Prostate gland (tissue), 2 donors: ENCODE measurements at regions of chr11 and their contacts with region 1.

Region 1: GRCh38 chr11:76680518-76681425 is 10.2 kb upstream of the LRRC32 start:
- DNase-seq: peak; percentile 36
- H3K4me3 ChIP-seq: no peak overlapping the region
- H3K27ac ChIP-seq: no peak overlapping the region
- H3K4me1 ChIP-seq: no peaks in the 10 kb centered on the region
- H3K27me3 ChIP-seq: no peaks in the 10 kb centered on the region
- CTCF ChIP-seq: peak; percentile 37 to 76 (median 70)
- POLR2A ChIP-seq: no peak

Region 2: DNA sequence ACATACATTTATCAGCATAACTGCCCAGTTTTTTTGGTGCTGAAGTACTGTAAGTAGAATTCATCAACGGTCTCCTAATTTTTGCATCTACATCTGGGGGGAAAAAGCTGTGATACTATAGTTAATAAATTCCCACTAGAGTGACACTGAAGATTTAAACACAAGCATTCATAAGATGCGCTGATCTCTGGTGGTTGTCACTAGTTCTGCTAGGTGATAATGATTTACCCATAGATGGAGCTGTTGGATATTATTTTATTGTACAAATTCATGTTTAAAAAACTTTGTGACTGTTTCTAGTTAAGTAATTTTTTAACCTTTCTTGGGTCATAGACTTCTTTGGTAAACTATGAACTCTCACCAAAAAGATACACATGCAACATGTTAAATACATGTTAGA is 129.4 kb before region 1 on chr11:
- intact Hi-C with region 1: loop called (anchors 5 kb)
- DNase-seq: no peak
- H3K4me3 ChIP-seq: no peak overlapping the region
- H3K27ac ChIP-seq: no peak overlapping the region
- H3K4me1 ChIP-seq: no peaks in the 10 kb centered on the region
- H3K27me3 ChIP-seq: no peaks in the 10 kb centered on the region
- CTCF ChIP-seq: no peak
- POLR2A ChIP-seq: no peak

Region 3: DNA sequence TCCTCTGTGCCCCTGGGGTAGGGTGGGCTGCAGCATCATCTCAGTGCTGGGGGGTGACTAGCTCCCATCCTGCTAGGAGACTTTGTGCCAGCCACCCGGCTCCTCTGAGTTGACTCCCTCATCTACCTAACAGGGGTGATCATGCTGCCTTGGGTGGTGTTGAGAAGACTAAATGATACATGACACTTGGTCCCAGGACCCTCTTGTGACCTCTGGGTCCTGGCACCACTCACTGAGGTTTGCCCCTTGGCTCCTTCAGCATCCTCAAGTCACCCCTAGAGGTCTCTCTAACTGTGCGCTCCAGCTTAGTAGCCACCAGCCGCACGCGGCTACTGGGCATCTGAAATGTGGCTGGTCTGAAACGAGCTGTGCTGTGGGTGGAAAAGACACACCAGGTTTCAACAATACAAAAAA is 82.3 kb before region 1 on chr11:
- intact Hi-C with region 1: loop called (anchors 2 kb)
- DNase-seq: no peak
- H3K4me3 ChIP-seq: no peak overlapping the region
- H3K27ac ChIP-seq: no peak overlapping the region
- H3K4me1 ChIP-seq: no peaks in the 10 kb centered on the region
- H3K27me3 ChIP-seq: no peaks in the 10 kb centered on the region
- CTCF ChIP-seq: peak in 1 of 4 experiments; percentile 14
- POLR2A ChIP-seq: no peak